Activated CD8-positive, alpha-beta T cell treated with anti-CD3 and anti-CD28 coated beads for 36 hours (primary cell): ENCODE measurements at regions of chr14 and their contacts with region 1.

Region 1: DNA sequence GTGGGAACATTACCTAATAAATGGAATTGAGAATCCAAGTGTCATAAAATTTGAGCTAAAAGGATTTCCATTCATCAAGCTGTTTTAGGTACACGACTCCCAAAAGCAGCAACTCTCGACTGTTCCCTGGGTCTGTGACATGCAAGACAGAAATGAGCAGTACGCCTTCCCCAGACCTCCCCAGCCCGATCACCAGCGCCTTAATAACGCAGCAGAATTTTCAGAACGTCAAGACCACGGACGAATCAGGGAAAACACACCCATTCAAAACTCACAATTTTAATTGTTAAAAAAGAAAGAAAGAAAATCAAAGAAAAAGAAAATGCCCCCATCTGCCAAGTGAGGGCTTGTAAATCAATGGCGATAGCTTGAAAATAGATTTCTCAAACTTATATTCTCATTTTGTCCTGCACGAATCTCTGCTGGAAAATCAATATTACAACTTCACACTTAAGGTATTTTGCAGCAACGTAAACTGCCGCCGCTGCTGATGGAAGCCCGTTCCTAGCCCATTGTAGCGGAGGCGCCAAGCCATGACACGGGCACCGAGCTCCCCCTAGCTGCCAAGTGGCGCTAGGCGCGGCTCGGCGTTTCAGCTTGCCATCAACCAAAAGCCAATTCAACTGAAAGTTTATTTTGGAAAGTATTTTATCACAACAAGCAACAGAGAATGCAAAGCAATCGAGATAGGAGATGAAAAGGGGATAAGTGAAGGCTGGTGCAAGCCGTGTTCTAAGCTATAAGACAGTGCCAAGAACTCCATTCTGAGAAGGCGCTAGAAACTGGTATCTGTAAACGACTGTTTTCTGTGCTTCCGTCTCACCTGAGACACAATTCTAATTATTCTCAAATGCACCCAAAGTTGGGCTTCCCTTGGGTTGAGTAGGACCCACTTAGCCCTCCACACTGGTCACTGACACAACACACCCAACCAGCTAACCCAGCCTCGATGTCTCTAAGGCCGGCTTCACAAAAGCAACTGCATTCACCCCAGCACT is 5.5 kb downstream of the BCL11B start:
- DNase-seq: peak; percentile 93
- ATAC-seq: peak; percentile 38
- H3K4me3 Mint-ChIP-seq: peak overlapping the region; percentile 86
- H3K27ac Mint-ChIP-seq: peak overlapping the region; percentile 98
- H3K4me1 Mint-ChIP-seq: peaks cover 42% of the 10 kb centered on the region
- H3K27me3 Mint-ChIP-seq: no peaks in the 10 kb centered on the region
- CTCF ChIP-seq: peak; percentile 97

Region 2: GRCh38 chr14:99177886-99178835 is 88.3 kb before region 1 on chr14:
- CTCF ChIA-PET with region 1: interaction called, 13 read pairs
- POLR2A ChIA-PET with region 1: interaction called, 5 read pairs
- intact Hi-C with region 1: no loop called
- DNase-seq: no peak
- ATAC-seq: no peak
- H3K4me3 Mint-ChIP-seq: peak overlapping the region; percentile 28
- H3K27ac Mint-ChIP-seq: peak overlapping the region; percentile 94
- H3K4me1 Mint-ChIP-seq: peaks cover 66% of the 10 kb centered on the region
- H3K27me3 Mint-ChIP-seq: no peaks in the 10 kb centered on the region
- CTCF ChIP-seq: no peak

Region 3: DNA sequence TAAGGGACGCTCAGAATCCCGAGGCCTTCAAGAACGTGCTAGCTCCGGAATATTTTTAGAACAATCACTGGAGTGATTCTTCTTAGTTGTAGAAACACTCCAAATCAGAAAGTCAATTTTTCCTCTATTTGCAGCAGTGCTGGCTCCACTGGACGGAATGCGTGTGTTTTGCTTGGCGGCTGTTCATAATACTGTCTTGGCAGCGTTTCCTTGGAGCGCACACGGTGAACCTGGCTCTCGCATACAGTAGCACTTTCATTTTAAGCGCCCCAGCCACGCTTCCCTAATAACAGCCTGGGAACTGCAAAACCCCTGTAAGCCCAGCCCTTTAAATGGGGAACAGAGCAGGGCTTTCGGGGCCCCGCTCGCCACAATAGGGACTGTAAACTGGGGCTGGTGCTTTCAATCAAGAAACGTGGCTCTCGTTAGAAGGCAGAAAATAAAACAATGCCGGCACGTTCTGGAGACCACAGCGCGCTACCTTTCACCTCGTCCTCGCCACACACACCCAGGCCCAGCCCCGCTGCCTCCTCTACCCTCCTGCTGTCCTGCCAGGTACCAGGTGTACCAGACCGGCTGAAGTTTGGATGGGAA is 74.4 kb before region 1 on chr14:
- CTCF ChIA-PET with region 1: interaction called, 27 read pairs
- POLR2A ChIA-PET with region 1: interaction called, 50 read pairs
- intact Hi-C with region 1: loop called (anchors 5 kb)
- DNase-seq: peak; percentile 53
- ATAC-seq: no peak
- H3K4me3 Mint-ChIP-seq: peak overlapping the region; percentile 81
- H3K27ac Mint-ChIP-seq: peak overlapping the region; percentile 98
- H3K4me1 Mint-ChIP-seq: peaks cover 84% of the 10 kb centered on the region
- H3K27me3 Mint-ChIP-seq: no peaks in the 10 kb centered on the region
- CTCF ChIP-seq: no peak

Region 4: GRCh38 chr14:99215277-99215676 is 51.2 kb before region 1 on chr14:
- CTCF ChIA-PET with region 1: interaction called, 10 read pairs
- POLR2A ChIA-PET with region 1: interaction called, 6 read pairs
- intact Hi-C with region 1: no loop called
- DNase-seq: no peak
- ATAC-seq: no peak
- H3K4me3 Mint-ChIP-seq: peak overlapping the region; percentile 64
- H3K27ac Mint-ChIP-seq: peak overlapping the region; percentile 98
- H3K4me1 Mint-ChIP-seq: peaks cover 93% of the 10 kb centered on the region
- H3K27me3 Mint-ChIP-seq: no peaks in the 10 kb centered on the region
- CTCF ChIP-seq: no peak

Region 5: GRCh38 chr14:99230208-99231151 is 36.0 kb before region 1 on chr14:
- CTCF ChIA-PET with region 1: interaction called, 189 read pairs
- POLR2A ChIA-PET with region 1: interaction called, 496 read pairs
- intact Hi-C with region 1: no loop called
- DNase-seq: peak; percentile 92
- ATAC-seq: peak; percentile 62
- H3K4me3 Mint-ChIP-seq: peak overlapping the region; percentile 79
- H3K27ac Mint-ChIP-seq: peak overlapping the region; percentile 99
- H3K4me1 Mint-ChIP-seq: peaks cover 92% of the 10 kb centered on the region
- H3K27me3 Mint-ChIP-seq: no peaks in the 10 kb centered on the region
- CTCF ChIP-seq: peak; percentile 54

Region 6: DNA sequence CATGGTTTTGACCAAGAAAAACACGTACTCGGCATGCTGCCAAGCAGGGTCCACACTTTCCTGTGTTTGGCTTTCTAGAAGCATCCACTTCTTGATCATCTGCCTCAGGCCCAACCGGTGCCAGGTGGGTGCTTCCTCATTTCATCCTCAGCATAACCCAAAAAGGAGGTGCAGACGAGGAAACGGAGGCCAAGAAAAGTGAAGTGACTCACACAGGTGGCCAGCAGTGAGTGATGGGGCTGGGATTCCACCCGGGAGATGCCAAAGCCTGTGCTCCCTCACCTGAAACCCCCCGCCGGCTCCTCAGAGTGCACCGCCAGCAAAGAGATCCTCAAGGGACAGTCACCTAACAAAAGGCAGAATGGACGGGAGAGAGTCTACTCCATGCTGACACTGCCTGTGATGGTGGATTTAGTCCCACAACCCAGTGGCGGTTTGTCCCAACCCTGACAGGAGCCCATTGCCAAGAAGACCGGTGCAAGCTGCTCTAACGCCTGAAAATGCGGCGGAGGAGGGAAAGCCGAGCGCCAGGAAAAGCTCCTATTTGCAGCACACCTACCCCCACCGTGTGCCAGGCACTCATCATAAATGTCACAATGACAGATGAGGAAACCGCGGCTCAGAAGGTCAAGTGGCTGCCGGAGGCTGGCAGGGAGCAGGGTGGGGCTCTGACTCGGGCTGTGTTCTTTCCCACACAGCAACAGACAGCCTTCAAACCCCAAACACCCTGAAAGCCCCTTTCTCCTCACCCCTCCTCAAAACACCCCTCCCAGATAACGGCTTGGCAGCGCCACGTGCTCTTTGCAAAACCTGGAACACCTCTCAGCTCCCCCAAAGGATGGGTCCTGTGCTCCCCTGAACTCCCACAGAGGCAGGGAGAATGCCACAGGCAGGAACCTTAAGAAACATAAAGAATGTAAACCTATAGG is 13.3 kb before region 1 on chr14:
- CTCF ChIA-PET with region 1: interaction called, 34 read pairs
- POLR2A ChIA-PET with region 1: interaction called, 496 read pairs
- intact Hi-C with region 1: no loop called
- DNase-seq: peak; percentile 87
- ATAC-seq: peak; percentile 62
- H3K4me3 Mint-ChIP-seq: peak overlapping the region; percentile 86
- H3K27ac Mint-ChIP-seq: peak overlapping the region; percentile 95
- H3K4me1 Mint-ChIP-seq: peaks cover 88% of the 10 kb centered on the region
- H3K27me3 Mint-ChIP-seq: no peaks in the 10 kb centered on the region
- CTCF ChIP-seq: no peak

Region 7: GRCh38 chr14:99424306-99424877 is 157.9 kb after region 1 on chr14:
- CTCF ChIA-PET with region 1: no interaction called
- POLR2A ChIA-PET with region 1: no interaction called
- intact Hi-C with region 1: no loop called
- DNase-seq: no peak
- ATAC-seq: no peak
- H3K4me3 Mint-ChIP-seq: no peak overlapping the region
- H3K27ac Mint-ChIP-seq: no peak overlapping the region
- H3K4me1 Mint-ChIP-seq: peaks cover 4% of the 10 kb centered on the region
- H3K27me3 Mint-ChIP-seq: no peaks in the 10 kb centered on the region
- CTCF ChIP-seq: no peak

Region 8: DNA sequence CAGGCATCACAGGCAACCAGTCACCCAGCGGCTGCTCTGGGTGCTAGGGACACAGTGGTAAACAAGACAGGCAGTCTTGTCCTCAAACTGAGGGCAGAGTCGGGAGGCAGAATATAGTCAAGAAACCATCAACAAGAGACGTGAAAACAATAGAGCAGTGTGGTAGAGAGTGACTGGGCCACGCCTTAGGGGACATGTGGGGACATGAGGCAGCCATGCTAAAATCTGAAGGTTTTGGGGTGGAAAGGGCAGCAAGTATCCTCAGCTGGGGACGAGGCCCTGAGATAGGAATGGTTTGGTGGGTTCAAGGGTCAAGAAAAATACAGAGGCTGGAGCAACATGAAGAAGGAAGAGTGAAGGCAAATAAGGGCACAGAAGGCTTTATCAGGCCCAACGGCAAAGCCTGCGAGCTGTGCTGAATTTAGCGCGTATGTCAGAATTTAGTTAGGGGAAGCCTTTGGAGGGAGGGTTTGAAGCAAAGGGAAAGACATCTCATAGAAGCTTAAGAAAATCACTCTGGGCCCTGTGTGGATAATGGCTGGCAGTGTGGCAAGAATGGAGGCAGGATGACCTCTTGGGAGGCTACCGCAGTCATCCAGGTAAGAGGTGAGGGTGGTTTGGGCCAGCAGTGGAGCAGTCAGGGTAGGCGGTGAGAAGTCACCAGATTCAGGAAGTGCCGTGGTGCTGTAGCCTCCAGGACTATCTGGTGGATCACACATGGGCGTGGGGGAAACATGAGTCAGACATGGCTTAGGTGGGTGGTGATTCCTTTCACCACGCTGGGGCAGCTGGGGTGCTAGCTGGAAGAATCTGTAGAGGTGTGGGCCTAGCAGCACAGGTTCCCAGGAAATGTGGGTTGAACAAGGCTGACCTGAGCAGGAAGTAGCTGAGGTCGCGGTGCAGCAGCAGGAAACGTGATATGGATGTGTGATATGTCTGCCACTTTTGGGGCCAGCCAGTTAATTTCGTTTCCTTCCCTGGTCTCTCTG is 801.8 kb after region 1 on chr14:
- CTCF ChIA-PET with region 1: no interaction called
- POLR2A ChIA-PET with region 1: no interaction called
- intact Hi-C with region 1: loop called (anchors 10 kb)
- DNase-seq: peak; percentile 95
- ATAC-seq: peak; percentile 41
- H3K4me3 Mint-ChIP-seq: peak overlapping the region; percentile 89
- H3K27ac Mint-ChIP-seq: peak overlapping the region; percentile 99
- H3K4me1 Mint-ChIP-seq: peaks cover 47% of the 10 kb centered on the region
- H3K27me3 Mint-ChIP-seq: no peaks in the 10 kb centered on the region
- CTCF ChIP-seq: no peak